ENCODE measurements at regions of chr12 and their contacts with region 1.

Region 1: GRCh38 chr12:2640705-2641104 is 154.1 kb upstream of the FKBP4 start:
- DNase-seq: peak; percentile 81
- ATAC-seq: peak; percentile 95
- H3K4me3 ChIP-seq: peak overlapping the region; percentile 22 to 45
- H3K27ac ChIP-seq: peak overlapping the region; percentile 81
- H3K4me1 ChIP-seq: peaks cover 22 to 35% of the 10 kb centered on the region in 2 experiments
- H3K27me3 ChIP-seq: no peaks in the 10 kb centered on the region
- CTCF ChIP-seq: no peak
- POLR2A ChIP-seq: no peak
- RAD21 ChIP-seq: no peak

Region 2: GRCh38 chr12:2624543-2625288 is 16.0 kb before region 1 on chr12:
- CTCF ChIA-PET with region 1: interaction called, 13 read pairs
- POLR2A ChIA-PET with region 1: interaction called, 3 read pairs
- RAD21 ChIA-PET with region 1: no interaction called
- intact Hi-C with region 1: no loop called
- DNase-seq: peak; percentile 36
- ATAC-seq: peak; percentile 89
- H3K4me3 ChIP-seq: no peak overlapping the region
- H3K27ac ChIP-seq: no peak overlapping the region
- H3K4me1 ChIP-seq: peaks cover 0 to 8% of the 10 kb centered on the region in 2 experiments; a peak in 2 of 4 replicates
- H3K27me3 ChIP-seq: peaks cover 21% of the 10 kb centered on the region
- CTCF ChIP-seq: peak; percentile 26 to 82 (median 70); a peak in 5 of 6 replicates
- POLR2A ChIP-seq: no peak
- RAD21 ChIP-seq: peak; percentile 40

Region 3: GRCh38 chr12:2652401-2653081 is 11.8 kb after region 1 on chr12:
- CTCF ChIA-PET with region 1: interaction called, 12 read pairs
- POLR2A ChIA-PET with region 1: interaction called, 6 read pairs
- RAD21 ChIA-PET with region 1: interaction called in 1 of 2 experiments, 4 read pairs
- intact Hi-C with region 1: no loop called
- DNase-seq: no peak
- ATAC-seq: peak; percentile 94
- H3K4me3 ChIP-seq: no peak overlapping the region
- H3K27ac ChIP-seq: no peak overlapping the region
- H3K4me1 ChIP-seq: no peaks in the 10 kb centered on the region; a peak in 1 of 4 replicates
- H3K27me3 ChIP-seq: no peaks in the 10 kb centered on the region
- CTCF ChIP-seq: peak; percentile 31 to 68 (median 49); a peak in 5 of 6 replicates
- POLR2A ChIP-seq: no peak
- RAD21 ChIP-seq: peak; percentile 67

Region 4: GRCh38 chr12:2682296-2683251 is 41.9 kb after region 1 on chr12:
- CTCF ChIA-PET with region 1: interaction called, 10 read pairs
- POLR2A ChIA-PET with region 1: no interaction called
- RAD21 ChIA-PET with region 1: no interaction called
- intact Hi-C with region 1: no loop called
- DNase-seq: peak; percentile 26
- ATAC-seq: peak; percentile 61
- H3K4me3 ChIP-seq: no peak overlapping the region
- H3K27ac ChIP-seq: no peak overlapping the region
- H3K4me1 ChIP-seq: no peaks in the 10 kb centered on the region
- H3K27me3 ChIP-seq: no peaks in the 10 kb centered on the region
- CTCF ChIP-seq: peak; percentile 51 to 66 (median 53); a peak in 5 of 6 replicates
- POLR2A ChIP-seq: no peak
- RAD21 ChIP-seq: peak; percentile 75

Region 5: GRCh38 chr12:2988494-2988893 is 347.8 kb after region 1 on chr12:
- CTCF ChIA-PET with region 1: no interaction called
- POLR2A ChIA-PET with region 1: no interaction called
- RAD21 ChIA-PET with region 1: no interaction called
- intact Hi-C with region 1: no loop called
- DNase-seq: no peak
- ATAC-seq: no peak
- H3K4me3 ChIP-seq: no peak overlapping the region
- H3K27ac ChIP-seq: no peak overlapping the region
- H3K4me1 ChIP-seq: no peaks in the 10 kb centered on the region
- H3K27me3 ChIP-seq: no peaks in the 10 kb centered on the region
- CTCF ChIP-seq: no peak
- POLR2A ChIP-seq: no peak
- RAD21 ChIP-seq: no peak

Measured in HCT116 (cell line).